ENCODE measurements at regions of chr17 and their contacts with region 1.

Region 1: GRCh38 chr17:42067351-42068091 is 17.1 kb upstream of the C17orf113 start:
- DNase-seq: peak; percentile 57
- H3K4me3 ChIP-seq: no peak overlapping the region
- H3K27ac ChIP-seq: no peak overlapping the region
- H3K4me1 ChIP-seq: peaks cover 3% of the 10 kb centered on the region
- H3K27me3 ChIP-seq: peaks cover 0 to 9% of the 10 kb centered on the region in 2 experiments
- CTCF ChIP-seq: peak; percentile 76 to 89
- POLR2A ChIP-seq: no peak

Region 2: GRCh38 chr17:42027961-42028790 is 39.3 kb before region 1 on chr17:
- CTCF ChIA-PET with region 1: interaction called, 6 read pairs
- POLR2A ChIA-PET with region 1: no interaction called
- dilution Hi-C with region 1: no loop called
- intact Hi-C with region 1: loop called (anchors 1 kb)
- DNase-seq: no peak
- H3K4me3 ChIP-seq: no peak overlapping the region
- H3K27ac ChIP-seq: no peak overlapping the region
- H3K4me1 ChIP-seq: peaks cover 20% of the 10 kb centered on the region
- H3K27me3 ChIP-seq: peaks cover 0 to 1% of the 10 kb centered on the region in 2 experiments
- CTCF ChIP-seq: no peak
- POLR2A ChIP-seq: no peak

Region 3: DNA sequence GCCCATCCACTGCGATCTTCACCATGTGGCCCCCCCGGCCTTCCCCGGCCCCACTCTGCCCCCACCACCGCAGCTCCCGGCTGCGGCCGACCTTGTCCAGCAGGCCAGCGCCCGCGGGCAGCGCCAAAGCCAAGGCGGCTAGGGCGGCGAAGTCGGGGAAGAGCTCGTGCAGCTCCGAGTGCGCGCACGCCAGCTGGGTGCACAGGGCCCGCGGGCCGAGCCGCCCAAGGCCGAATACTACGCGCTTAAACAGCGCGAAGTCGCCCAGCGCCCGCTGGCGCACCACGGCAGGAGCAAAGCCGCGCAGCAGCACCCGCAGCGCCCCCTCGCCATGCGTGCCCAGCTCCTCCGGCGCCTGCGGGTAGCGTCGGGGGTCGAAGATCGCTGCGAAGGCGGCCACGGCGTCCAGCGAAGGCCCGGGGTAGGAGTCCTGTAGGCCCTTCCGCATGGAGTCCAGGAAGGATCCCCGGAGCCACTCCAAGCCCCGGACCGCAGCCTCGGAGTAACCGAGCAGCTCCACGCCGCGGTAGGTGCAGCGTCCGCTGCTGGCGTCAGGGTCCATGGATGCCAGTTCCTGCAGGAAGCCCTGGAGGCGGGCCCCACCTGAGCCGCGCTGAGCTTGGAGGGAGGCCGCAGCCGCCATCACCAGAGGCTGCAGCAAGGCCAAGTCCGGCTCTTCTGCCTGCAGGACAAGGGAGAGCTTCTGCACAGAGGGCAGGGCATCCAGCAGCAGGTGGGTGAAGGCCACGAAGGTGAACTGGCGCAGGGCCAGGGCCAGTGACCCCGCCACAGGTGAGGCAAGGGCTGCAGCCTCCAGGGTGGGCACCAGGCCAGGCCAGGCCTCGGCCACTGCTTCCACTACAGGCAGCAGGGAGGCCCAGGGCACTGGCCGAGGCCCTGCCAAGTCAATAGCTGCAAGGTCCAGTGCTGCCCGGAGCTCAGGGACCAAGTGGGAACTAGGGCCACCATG is 27.4 kb before region 1 on chr17:
- CTCF ChIA-PET with region 1: interaction called, 10 read pairs
- POLR2A ChIA-PET with region 1: interaction called, 4 read pairs
- dilution Hi-C with region 1: no loop called
- intact Hi-C with region 1: no loop called
- DNase-seq: no peak
- H3K4me3 ChIP-seq: peak overlapping the region in 1 of 3 experiments; percentile 23
- H3K27ac ChIP-seq: no peak overlapping the region
- H3K4me1 ChIP-seq: no peaks in the 10 kb centered on the region
- H3K27me3 ChIP-seq: no peaks in the 10 kb centered on the region
- CTCF ChIP-seq: no peak
- POLR2A ChIP-seq: no peak

Region 4: DNA sequence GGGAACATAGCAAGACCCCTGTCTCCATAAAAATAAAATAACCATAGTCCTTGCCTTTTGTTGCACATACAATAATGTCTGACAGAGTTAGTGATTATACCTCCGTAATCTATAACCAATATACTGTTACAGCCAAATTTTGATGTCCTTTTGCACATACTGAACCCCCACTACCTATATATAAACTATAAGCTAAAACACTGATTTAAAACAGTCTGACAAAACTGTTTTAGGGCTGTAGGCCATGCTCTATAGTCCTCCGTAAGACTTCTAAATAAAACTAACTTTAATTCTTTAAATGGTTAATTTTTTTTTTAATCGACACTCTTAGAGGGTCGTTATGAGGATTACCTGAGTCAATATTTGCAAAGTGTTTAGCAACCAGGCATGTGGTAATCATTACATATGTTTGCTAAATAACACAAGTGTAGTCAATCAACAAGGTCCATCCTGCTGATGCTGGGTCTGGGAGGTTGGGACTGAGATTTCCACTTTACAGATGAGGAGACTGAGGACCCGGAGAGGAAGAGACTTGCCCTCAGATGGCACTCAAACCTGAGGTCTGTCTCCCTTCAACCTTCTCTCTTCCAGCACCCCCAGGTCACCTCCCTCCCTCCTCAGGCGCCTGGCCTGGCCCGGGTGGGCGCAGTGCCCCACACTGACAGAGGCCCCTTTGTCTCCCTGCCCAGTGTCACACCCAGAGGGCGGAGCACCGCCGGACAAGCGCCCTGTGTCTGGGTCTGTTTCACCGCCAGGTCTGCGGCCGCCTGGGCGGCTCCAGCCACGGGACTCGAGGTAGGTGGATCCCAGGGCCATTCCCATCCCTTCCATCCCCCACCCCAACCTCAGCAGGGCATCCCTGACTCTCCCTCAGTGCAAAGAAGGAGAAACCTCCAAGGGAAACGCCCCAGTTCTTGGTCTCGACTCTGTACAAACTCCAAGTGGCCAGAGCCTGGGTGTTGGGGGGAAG is 20.5 kb after region 1 on chr17:
- CTCF ChIA-PET with region 1: interaction called, 16 read pairs
- POLR2A ChIA-PET with region 1: no interaction called
- dilution Hi-C with region 1: no loop called
- intact Hi-C with region 1: no loop called
- DNase-seq: no peak
- H3K4me3 ChIP-seq: no peak overlapping the region
- H3K27ac ChIP-seq: no peak overlapping the region
- H3K4me1 ChIP-seq: no peaks in the 10 kb centered on the region
- H3K27me3 ChIP-seq: peaks cover 11 to 13% of the 10 kb centered on the region in 2 experiments
- CTCF ChIP-seq: no peak
- POLR2A ChIP-seq: no peak

Region 5: GRCh38 chr17:42112552-42113176 is 45.1 kb after region 1 on chr17 and contains the start of gene DHX58:
- CTCF ChIA-PET with region 1: interaction called, 6 read pairs
- POLR2A ChIA-PET with region 1: no interaction called
- dilution Hi-C with region 1: no loop called
- intact Hi-C with region 1: loop called (anchors 1 kb)
- DNase-seq: peak; percentile 88
- H3K4me3 ChIP-seq: peak within 1 kb of the TSS in 2 of 3 experiments; percentile 29 to 31
- H3K27ac ChIP-seq: peak within 1 kb of the TSS; percentile 5
- H3K4me1 ChIP-seq: peaks cover 9% of the 10 kb centered on the region
- H3K27me3 ChIP-seq: no peaks in the 10 kb centered on the region
- CTCF ChIP-seq: no peak
- POLR2A ChIP-seq: peak; percentile 74
- total RNA-seq, gene DHX58: 3.1 and 6.4 TPM in 2 replicates

Region 6: GRCh38 chr17:42183741-42184711 is 116.5 kb after region 1 on chr17:
- CTCF ChIA-PET with region 1: interaction called, 9 read pairs
- POLR2A ChIA-PET with region 1: no interaction called
- dilution Hi-C with region 1: no loop called
- intact Hi-C with region 1: loop called (anchors 5 kb)
- DNase-seq: peak; percentile 70
- H3K4me3 ChIP-seq: peak overlapping the region; percentile 35 to 51 (median 45)
- H3K27ac ChIP-seq: peak overlapping the region; percentile 16
- H3K4me1 ChIP-seq: peaks cover 14% of the 10 kb centered on the region
- H3K27me3 ChIP-seq: peaks cover 9 to 13% of the 10 kb centered on the region in 2 experiments
- CTCF ChIP-seq: peak; percentile 86 to 99
- POLR2A ChIP-seq: peak; percentile 38